Heart left ventricle (tissue), 16 donors: ENCODE measurements at regions of chr21 and their contacts with region 1.

Region 1: DNA sequence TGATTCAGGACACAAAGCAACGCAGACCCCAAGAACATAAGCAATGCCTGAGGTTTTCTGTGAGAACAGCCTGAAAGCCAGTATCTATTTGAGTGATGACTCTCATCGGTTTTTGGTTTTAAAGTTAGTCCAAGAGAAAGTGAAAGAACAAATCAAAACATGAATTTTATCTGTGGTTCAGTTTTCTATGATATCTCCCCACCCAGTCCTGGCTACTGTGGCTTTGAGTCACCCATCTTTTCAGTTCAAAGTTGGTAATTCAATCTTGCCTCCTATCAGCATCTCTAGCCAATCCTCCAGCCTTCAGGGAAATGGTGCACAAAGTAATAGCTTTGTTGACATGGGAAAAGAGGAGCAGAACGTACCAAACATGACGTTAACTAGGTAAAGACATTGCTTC is 40.5 kb upstream of the KRTAP19-8 start:
- DNase-seq: no peak
- ATAC-seq: no peak
- H3K4me3 ChIP-seq: no peak overlapping the region
- H3K27ac ChIP-seq: no peak overlapping the region
- H3K4me1 ChIP-seq: no peaks in the 10 kb centered on the region
- H3K27me3 ChIP-seq: no peaks in the 10 kb centered on the region
- CTCF ChIP-seq: no peak
- POLR2A ChIP-seq: no peak

Region 2: GRCh38 chr21:30718239-30718909 is 360.4 kb before region 1 on chr21 and contains the start of gene KRTAP21-3:
- intact Hi-C with region 1: no loop called
- DNase-seq: no peak
- ATAC-seq: no peak
- H3K4me3 ChIP-seq: no peak within 1 kb of the TSS
- H3K27ac ChIP-seq: no peak within 1 kb of the TSS
- H3K4me1 ChIP-seq: no peaks in the 10 kb centered on the region
- H3K27me3 ChIP-seq: no peaks in the 10 kb centered on the region
- CTCF ChIP-seq: no peak
- POLR2A ChIP-seq: no peak
- total RNA-seq, gene KRTAP21-3: not detected

Region 3: GRCh38 chr21:30747159-30747558 is 331.6 kb before region 1 on chr21 and contains the start of gene KRTAP21-2:
- intact Hi-C with region 1: loop called in 1 of 10 experiments (anchors 10 kb)
- DNase-seq: no peak
- ATAC-seq: no peak
- H3K4me3 ChIP-seq: no peak within 1 kb of the TSS
- H3K27ac ChIP-seq: no peak within 1 kb of the TSS
- H3K4me1 ChIP-seq: no peaks in the 10 kb centered on the region
- H3K27me3 ChIP-seq: no peaks in the 10 kb centered on the region
- CTCF ChIP-seq: no peak
- POLR2A ChIP-seq: no peak
- total RNA-seq, gene KRTAP21-2: not detected

Region 4: DNA sequence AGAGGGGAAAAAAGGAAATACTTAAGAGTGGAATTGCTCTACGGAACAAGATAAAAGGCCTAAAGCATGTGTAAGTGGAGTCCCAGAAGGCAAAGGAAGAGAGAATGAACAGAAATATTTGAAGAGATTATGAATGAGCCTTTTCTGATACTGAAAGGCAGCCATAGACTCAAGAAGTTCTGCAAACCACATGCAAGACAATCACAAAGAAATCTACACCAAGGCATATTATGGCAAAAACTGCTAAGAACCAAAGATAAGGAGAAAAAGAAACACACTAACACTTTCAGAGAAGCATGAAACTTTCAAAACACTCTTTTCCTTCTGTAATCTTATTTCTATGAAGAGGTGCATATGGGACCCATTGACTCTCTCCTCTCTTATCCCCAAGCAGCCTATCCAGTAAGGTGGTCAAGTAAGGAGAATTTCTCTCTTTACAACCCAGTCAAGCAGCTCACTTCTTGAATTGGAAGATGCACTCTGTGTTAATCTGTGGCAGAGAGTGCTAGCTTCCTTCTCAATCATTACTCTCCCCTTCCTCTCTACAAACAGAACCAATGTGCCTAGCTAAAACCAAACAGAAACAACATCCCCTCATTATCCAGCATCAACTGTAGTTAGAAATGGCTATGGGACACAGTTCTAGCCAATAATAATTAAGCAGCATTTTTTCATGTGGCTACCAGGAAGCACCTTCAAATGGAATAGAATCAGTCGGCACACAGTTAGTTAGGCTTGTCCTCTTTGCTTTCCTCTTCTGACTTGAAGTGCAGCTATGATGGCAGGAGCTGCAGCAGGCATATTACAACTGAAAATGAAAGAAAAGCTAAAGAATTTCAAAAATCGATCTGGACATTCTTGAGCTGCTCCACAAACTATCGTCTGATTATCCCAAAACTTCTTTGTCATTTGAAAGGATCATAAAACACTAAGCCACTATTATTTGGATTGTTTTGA is 66.4 kb before region 1 on chr21:
- intact Hi-C with region 1: loop called in 1 of 10 experiments (anchors 10 kb)
- DNase-seq: no peak
- ATAC-seq: no peak
- H3K4me3 ChIP-seq: no peak overlapping the region
- H3K27ac ChIP-seq: no peak overlapping the region
- H3K4me1 ChIP-seq: no peaks in the 10 kb centered on the region
- H3K27me3 ChIP-seq: no peaks in the 10 kb centered on the region
- CTCF ChIP-seq: no peak
- POLR2A ChIP-seq: no peak

Region 5: DNA sequence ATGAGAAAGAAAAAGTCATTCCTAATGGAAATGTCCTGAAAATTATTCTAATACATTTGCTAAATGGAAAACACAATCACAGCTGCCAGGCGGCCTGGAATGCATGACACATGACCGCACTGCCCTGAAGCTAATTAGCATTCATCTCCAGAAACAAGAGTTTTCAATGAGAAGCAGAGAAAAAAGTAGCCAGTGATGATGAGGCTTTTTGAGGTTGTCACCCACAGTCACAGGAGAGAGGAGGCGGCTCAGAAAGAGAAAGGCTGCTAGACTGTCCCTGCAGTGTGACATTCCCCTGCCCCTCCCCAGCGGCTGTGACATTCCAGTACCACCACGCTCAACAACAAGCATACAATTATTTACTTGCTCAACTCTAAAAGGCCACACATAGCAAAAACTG is 82.4 kb after region 1 on chr21:
- intact Hi-C with region 1: no loop called
- DNase-seq: no peak
- ATAC-seq: no peak
- H3K4me3 ChIP-seq: no peak overlapping the region
- H3K27ac ChIP-seq: peak overlapping the region in 1 of 12 donors; percentile 4
- H3K4me1 ChIP-seq: peaks cover 0 to 25% (median 0%) of the 10 kb centered on the region in 12 donors
- H3K27me3 ChIP-seq: peaks cover 0 to 10% (median 0%) of the 10 kb centered on the region in 9 donors
- CTCF ChIP-seq: no peak
- POLR2A ChIP-seq: no peak